Right ventricle myocardium superior (tissue), 1 donor: ENCODE measurements at regions of chr7 and their contacts with region 1.

Region 1: DNA sequence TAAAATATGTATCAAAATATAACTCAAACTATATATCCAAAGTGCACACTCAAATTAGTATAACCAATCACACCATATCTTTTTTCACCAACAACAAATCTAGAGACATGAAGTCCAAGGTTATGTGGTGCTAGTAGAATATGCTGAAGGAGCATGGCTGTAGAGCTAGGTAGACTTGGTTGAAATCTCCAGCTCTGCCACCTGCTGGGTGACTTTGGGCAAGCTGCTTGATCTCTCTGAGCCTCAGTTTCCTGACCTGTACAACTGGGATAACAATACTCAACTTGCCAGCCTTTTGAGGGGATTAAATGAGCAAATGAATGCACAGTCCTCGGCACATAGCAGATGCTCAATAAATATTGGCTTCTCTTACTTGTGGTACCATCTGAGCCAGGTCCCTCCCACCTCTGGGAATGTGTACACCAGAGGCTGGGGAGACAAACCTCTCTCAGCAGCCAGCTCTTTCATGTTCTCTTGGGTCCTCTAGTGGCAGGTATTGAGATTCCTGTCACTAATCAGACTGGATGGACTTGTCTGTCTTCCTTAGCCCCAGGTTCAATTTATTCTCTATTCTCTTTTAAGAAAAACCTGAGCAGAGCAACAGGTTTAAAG is 94.2 kb upstream of the PDE1C start:
- DNase-seq: no peak
- ATAC-seq: peak; percentile 83

Region 2: DNA sequence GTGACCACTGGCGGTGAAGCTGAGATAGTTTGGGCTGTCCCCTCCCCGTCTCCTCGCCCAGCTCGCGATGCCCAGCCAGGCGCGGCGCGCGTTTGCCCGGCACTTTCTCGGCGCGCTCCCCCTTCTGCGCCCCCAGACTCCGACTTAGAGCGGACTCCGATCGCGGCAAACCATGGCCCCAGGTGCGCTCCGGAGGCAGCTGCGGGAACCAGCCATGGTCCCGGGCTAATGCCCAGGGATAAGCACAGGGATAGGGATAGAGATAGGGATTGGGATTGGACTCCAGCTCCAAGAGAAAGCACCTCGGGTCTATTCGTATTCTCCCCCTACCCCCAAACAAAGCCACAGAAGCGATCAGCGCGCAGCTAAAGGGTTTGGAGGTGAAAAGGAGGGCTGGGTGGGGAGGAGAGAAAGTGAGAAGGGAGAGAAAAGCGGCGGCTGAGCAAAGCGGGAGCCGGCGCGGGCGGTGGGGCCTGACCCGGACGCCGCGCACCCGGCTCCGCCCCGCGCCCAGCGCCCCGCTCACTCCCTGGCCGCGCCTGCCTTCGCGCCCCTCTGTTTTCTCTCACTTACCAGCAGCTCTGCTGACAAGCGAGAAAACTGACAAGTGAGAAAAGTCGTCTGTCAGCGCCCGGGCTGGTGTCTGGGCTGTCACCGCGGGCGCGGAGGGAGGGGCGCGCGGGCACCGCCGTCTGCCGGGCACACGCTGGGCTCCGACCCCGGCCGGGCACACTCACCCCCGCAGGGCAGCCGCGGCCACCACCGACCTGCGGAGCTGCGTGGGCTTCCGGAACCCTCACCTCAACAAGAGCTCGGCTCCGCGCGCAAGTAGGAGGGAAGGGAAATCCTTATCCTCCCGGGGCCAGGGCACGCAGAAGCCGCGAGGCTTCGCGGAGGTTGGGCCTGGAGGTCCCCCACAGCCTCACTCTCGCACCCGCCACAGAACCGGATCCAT is 93.8 kb before region 1 on chr7 and contains the start of gene PDE1C:
- intact Hi-C with region 1: loop called (anchors 5 kb)
- DNase-seq: peak; percentile 82
- ATAC-seq: peak; percentile 89
- total RNA-seq, gene PDE1C: 181 TPM